ENCODE measurements at regions of chr15 and their contacts with region 1.

Region 1: DNA sequence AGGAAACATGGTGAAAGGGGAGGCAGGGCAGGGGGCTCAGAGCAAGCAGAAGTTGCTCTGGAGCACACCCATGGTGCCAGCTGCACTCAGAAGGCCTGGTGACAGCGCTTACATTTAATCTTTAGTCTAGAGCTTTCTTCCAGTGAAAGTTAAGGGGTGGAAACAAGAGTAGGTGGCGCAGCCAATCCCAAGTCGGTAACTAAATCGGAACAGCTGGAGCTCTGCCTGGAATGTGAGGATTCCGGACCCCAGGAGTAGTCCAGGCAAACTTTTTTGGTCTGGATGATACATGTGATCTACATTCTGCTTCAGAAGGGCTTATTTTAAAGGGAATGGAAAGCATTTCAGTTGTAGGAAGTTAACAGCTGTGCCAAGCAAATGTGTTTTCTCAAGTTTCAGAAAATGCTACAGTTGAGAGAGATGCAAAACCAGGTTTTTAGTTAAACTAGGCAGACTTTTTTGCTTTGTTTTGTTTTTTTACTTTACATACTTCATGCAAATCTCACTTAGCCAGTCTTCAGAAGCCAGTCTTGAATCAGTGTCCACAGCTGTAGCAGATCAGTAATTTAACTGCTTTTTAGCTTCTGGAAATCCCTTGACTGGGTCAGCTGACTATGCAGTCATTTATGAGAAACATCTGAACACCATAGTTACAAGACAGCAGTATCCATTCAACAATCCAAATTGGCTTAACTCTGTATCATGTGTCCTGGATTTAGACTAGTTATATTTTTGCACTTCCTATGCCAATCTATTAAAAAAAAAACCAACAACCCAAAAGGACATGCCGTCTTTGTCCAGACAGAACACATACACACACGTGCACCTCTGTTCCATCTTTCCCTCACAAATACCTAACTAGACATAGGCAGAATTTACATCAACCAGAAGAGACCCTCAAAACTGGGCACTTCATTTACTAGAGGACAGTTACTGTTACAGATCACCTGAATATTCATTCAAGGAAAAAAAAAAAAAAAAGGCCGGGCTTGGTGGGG is 33.2 kb downstream of the ZNF106 start:
- DNase-seq: peak; percentile 67 to 90 (median 86)
- ATAC-seq: peak; percentile 93 to 95 (median 94)
- H3K4me3 ChIP-seq: peak overlapping the region; percentile 6 to 62 (median 52)
- H3K27ac ChIP-seq: peak overlapping the region; percentile 73 to 92 (median 82)
- H3K4me1 ChIP-seq: peaks cover 0 to 56% (median 30%) of the 10 kb centered on the region in 12 donors
- H3K27me3 ChIP-seq: no peaks in the 10 kb centered on the region
- CTCF ChIP-seq: no peak
- POLR2A ChIP-seq: peak in 1 of 2 donors; percentile 80

Region 2: GRCh38 chr15:42474827-42475226 is 17.1 kb after region 1 on chr15:
- intact Hi-C with region 1: loop called in 1 of 10 experiments (anchors 2 kb)
- DNase-seq: no peak
- ATAC-seq: no peak
- H3K4me3 ChIP-seq: no peak overlapping the region
- H3K27ac ChIP-seq: peak overlapping the region in 1 of 12 donors; percentile 50
- H3K4me1 ChIP-seq: peaks cover 0 to 33% (median 8%) of the 10 kb centered on the region in 12 donors
- H3K27me3 ChIP-seq: no peaks in the 10 kb centered on the region
- CTCF ChIP-seq: no peak
- POLR2A ChIP-seq: no peak